HEK293 (cell line): ENCODE measurements at regions of chr5 and their contacts with region 1.

Region 1: GRCh38 chr5:98768160-98769005 is 5.1 kb upstream of the RGMB start:
- H3K4me3 ChIP-seq: peak overlapping the region; percentile 53
- H3K27ac ChIP-seq: peak overlapping the region; percentile 92; the same call in 1 of the 2 replicates
- H3K4me1 ChIP-seq: peaks cover 9% of the 10 kb centered on the region
- CTCF ChIP-seq: peak; percentile 78

Region 2: GRCh38 chr5:98780390-98780789 is 12.0 kb after region 1 on chr5:
- CTCF ChIA-PET with region 1: interaction called, 12 read pairs
- POLR2A ChIA-PET with region 1: no interaction called
- H3K4me3 ChIP-seq: no peak overlapping the region
- H3K27ac ChIP-seq: no peak overlapping the region
- H3K4me1 ChIP-seq: peaks cover 24% of the 10 kb centered on the region
- CTCF ChIP-seq: no peak